Psoas muscle (tissue), 8 donors: ENCODE measurements at regions of chr3 and their contacts with region 1.

Region 1: GRCh38 chr3:35744419-35744818 is 105.1 kb downstream of the ARPP21 start:
- DNase-seq: no peak
- ATAC-seq: peak in 2 of 4 donors; percentile 27 to 29
- H3K4me3 ChIP-seq: no peak overlapping the region
- H3K27ac ChIP-seq: no peak overlapping the region
- H3K4me1 ChIP-seq: no peaks in the 10 kb centered on the region
- H3K27me3 ChIP-seq: no peaks in the 10 kb centered on the region
- CTCF ChIP-seq: no peak

Region 2: GRCh38 chr3:35690271-35690670 is 54.1 kb before region 1 on chr3:
- intact Hi-C with region 1: loop called in 1 of 2 experiments (anchors 5 kb)
- DNase-seq: no peak
- ATAC-seq: no peak
- H3K4me3 ChIP-seq: no peak overlapping the region
- H3K27ac ChIP-seq: no peak overlapping the region
- H3K4me1 ChIP-seq: no peaks in the 10 kb centered on the region
- H3K27me3 ChIP-seq: no peaks in the 10 kb centered on the region
- CTCF ChIP-seq: no peak

Region 3: DNA sequence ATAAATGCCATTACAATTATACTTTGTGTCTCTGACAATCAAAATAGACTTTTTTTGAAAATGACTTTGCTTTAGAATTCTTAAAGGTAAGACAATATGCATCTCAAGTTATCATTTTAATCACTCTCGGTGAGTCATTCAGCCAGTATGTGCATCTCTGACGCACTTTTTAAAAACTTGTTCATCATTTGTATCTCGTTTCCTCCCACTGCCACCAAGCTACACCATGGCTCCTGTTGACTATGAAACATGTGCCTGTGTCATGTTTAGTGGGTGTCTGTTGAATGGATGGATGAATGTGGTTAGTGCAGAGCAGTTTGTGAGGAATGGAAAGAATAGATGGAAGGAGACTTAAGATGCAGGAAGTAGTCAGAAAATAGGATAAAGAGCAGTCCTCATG is 36.5 kb before region 1 on chr3:
- intact Hi-C with region 1: loop called in 1 of 2 experiments (anchors 5 kb)
- DNase-seq: no peak
- ATAC-seq: peak in 3 of 4 donors; percentile 47 to 52 (median 48)
- H3K4me3 ChIP-seq: no peak overlapping the region
- H3K27ac ChIP-seq: no peak overlapping the region
- H3K4me1 ChIP-seq: no peaks in the 10 kb centered on the region
- H3K27me3 ChIP-seq: no peaks in the 10 kb centered on the region
- CTCF ChIP-seq: no peak

Region 4: GRCh38 chr3:35932995-35933394 is 188.6 kb after region 1 on chr3:
- intact Hi-C with region 1: no loop called
- DNase-seq: no peak
- ATAC-seq: no peak
- H3K4me3 ChIP-seq: no peak overlapping the region
- H3K27ac ChIP-seq: no peak overlapping the region
- H3K4me1 ChIP-seq: no peaks in the 10 kb centered on the region
- H3K27me3 ChIP-seq: no peaks in the 10 kb centered on the region
- CTCF ChIP-seq: no peak